Posterior vena cava (tissue), 2 donors: ENCODE measurements at regions of chr17 and their contacts with region 1.

Region 1: GRCh38 chr17:50681263-50682210 is 26.2 kb downstream of the ANKRD40 start:
- DNase-seq: peak; percentile 76

Region 2: DNA sequence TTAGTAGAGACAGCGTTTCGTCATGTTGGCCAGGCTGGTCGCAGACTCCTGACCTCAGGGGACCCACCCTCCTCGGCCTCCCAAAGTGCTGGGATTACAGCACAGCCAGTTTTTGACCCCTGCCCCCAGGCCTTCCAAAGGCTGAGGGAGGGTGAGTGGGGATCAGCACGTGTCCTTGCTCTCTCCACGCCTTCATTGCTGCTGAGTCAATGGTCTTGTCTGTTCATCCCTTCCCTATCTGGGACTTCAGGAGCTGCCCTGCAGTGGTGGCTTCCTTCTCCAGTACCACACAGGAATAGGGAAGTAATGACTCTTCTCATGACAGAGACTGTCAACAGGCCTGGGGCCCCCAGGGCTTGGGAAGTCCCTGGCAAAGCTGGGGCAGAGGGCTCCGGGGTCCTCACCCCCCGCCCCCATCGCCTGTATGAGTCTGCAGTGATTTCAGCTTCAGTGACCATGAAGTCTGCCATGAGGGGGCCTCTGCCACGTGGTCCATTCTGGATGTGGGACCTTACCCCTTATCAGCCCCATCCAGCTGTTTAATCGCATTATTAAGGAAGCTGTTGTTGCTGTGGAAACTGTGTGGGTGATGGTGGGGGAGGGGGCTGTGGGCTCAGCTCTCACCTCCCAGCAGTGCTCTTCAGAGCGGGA is 40.7 kb before region 1 on chr17:
- intact Hi-C with region 1: loop called in 1 of 2 experiments (anchors 5 kb)
- DNase-seq: no peak

Region 3: DNA sequence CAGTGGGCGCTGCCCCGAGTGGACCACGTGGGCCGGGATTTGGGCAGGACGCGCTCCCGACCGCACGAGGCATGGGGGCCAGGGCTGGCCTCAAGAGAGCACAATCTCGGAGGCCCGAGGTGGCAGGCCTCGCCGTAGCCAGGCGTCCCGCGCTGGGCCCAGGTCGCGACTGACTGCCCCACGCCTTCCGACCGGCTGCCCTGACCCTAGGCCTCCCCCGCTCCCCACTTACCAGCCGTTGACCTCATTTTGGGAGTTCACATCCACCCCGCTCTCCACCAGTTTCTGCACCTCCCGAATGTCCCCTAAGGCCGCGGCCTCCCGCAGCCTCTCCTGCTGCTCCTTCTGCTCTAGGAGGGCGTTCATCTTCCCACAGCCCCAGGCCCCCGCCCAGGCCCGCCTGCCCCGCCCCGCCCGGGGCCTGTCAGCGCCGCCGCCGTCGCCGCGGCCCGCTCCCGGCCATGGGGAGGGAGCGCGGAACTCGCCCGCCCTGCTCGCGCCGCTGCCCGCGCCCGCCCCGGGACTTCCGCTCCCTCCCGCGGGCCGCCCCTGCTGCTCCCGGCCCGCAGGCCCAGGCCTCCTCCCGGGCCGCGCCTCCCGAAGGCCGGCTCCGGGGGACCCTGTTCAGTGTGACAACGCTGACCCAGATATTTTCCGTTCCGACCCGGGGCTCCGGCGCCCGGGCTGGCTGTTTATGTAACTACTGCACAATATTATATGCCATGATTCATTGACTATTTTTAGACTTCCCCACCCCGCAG is 25.9 kb after region 1 on chr17 and contains the start of gene ANKRD40:
- intact Hi-C with region 1: no loop called
- DNase-seq: peak; percentile 95
- total RNA-seq, gene ANKRD40: 57.4 to 77.3 TPM